ENCODE measurements at regions of chr2 and their contacts with region 1.

Region 1: DNA sequence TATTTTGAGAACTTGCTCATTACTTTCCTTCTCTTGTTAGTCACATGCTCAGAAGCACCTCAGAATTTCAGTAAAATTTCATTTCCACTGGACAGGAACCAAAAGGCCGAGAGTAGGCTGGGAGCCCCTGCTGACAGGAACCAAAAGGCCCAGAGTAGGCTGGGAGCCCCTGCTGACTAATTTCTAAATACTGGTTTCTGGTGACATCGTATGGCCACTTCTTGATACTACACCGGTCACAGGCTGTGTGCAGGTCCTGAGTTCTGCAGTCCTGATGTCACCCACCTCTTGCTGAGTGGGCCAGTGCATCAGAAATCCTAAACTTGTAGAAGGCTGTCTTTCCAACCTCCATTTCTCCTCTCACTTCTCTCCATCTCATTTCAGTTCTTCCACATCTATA is 17.7 kb upstream of the EN1 start:
- DNase-seq: peak in 1 of 4 donors; percentile 59
- ATAC-seq: peak; percentile 89
- H3K4me3 ChIP-seq: no peak overlapping the region
- H3K27ac ChIP-seq: no peak overlapping the region
- H3K4me1 ChIP-seq: no peaks in the 10 kb centered on the region
- H3K27me3 ChIP-seq: peaks cover 18 to 49% of the 10 kb centered on the region in 2 donors
- CTCF ChIP-seq: peak; percentile 44 to 52

Region 2: DNA sequence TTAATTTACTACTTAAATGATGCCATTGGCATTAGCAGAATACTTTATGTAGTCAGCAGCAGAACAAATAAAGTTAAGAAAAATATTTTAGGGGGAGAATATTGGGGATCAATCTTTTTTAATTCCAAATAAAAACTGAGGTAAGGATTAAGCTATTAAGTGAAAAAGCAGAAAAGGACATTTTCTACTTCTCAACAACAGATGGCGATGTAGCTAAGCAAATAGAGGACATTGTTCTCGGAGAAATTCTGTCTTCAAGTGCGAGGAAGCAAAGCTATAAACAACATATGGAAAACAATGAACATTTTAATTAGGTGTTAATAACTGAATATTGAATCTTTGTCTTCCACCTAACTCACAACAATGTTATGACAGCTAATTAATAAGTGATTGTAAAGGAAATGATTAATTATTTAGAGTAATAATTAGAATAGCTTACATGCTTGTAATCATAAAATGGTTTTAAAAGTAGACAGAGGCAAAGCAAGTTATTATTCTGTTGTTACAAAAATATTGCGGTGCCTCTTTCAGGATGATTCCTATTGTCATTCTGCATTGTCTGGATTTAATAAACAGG is 818.4 kb before region 1 on chr2:
- intact Hi-C with region 1: loop called in 1 of 2 experiments (anchors 10 kb)
- DNase-seq: peak in 2 of 4 donors; percentile 23 to 40
- ATAC-seq: peak; percentile 95
- H3K4me3 ChIP-seq: no peak overlapping the region
- H3K27ac ChIP-seq: no peak overlapping the region
- H3K4me1 ChIP-seq: peaks cover 3 to 23% of the 10 kb centered on the region in 2 donors
- H3K27me3 ChIP-seq: peaks cover 3 to 31% of the 10 kb centered on the region in 2 donors
- CTCF ChIP-seq: peak; percentile 47 to 73

Region 3: DNA sequence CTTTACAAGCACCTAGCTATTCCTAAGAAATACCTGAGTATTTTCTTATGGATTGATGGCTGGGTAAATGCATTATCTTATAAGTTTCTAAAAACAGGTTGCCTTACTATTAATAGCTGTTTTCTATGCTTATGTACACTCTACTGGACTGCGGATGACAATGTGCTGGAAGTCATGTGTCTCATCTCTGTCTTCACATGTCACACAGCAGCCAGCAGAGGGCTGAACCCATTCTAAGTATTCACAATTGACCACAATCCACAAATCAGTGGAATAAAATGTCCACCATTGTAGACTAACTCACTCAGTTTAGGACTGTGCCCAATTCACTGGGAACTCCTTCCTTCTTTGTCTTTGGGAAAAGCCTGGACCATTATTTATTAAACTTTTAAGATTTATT is 405.7 kb before region 1 on chr2:
- intact Hi-C with region 1: no loop called
- DNase-seq: no peak
- ATAC-seq: no peak
- H3K4me3 ChIP-seq: no peak overlapping the region
- H3K27ac ChIP-seq: no peak overlapping the region
- H3K4me1 ChIP-seq: no peaks in the 10 kb centered on the region
- H3K27me3 ChIP-seq: no peaks in the 10 kb centered on the region
- CTCF ChIP-seq: no peak

Measured in left lung (tissue), 14 donors.